Sigmoid colon (tissue), 7 donors: ENCODE measurements at regions of chr18 and their contacts with region 1.

Region 1: GRCh38 chr18:5295981-5296705 is 617 bp upstream of the ZBTB14 start:
- DNase-seq: peak; percentile 98
- H3K4me3 ChIP-seq: peak overlapping the region; percentile 83 to 96 (median 88)
- H3K27ac ChIP-seq: peak overlapping the region; percentile 98 to 100 (median 100)
- H3K4me1 ChIP-seq: peaks cover 0 to 17% (median 12%) of the 10 kb centered on the region in 4 donors
- H3K27me3 ChIP-seq: no peaks in the 10 kb centered on the region
- CTCF ChIP-seq: no peak
- EP300 ChIP-seq: peak in 1 of 4 donors; percentile 19
- POLR2A ChIP-seq: no peak

Region 2: DNA sequence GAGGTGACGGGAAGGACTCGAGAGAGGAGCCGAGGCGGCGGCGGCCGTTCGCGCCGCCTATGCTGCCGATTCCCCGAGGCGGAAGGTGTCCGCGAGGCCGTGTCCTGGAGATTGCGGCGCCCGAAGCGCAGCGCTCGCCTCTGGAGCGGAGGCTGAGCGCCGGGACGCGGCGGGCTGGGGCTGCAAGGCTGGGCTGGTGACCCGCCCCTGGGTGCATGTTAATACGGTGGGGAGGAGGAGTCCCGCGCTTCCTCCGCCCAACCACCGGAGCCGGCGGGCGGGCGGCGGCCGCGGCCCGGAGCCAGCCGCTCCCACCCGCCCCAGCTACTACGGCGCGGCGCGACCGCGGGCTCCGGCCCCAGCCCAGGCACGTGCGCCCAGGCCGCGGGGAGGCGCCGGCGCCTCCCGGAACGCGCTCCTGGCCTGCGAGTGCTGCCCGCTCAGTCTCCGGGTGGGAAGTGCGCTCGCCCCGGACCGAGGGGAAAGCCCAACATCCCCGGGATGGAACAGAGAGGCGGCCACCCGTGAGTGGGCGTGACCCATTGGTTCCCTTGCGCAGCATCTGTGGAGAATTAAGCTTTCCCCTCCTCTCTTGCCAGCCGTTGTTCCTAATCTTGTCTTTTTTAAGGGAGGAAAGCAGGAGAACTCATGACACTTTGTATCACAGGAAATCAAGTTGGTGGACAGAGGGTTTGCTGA is 840.9 kb before region 1 on chr18 and contains the start of gene DLGAP1:
- intact Hi-C with region 1: no loop called
- DNase-seq: peak; percentile 63
- H3K4me3 ChIP-seq: peak within 1 kb of the TSS in 3 of 4 donors; percentile 38 to 51 (median 45)
- H3K27ac ChIP-seq: no peak within 1 kb of the TSS
- H3K4me1 ChIP-seq: peaks cover 0 to 19% (median 16%) of the 10 kb centered on the region in 4 donors
- H3K27me3 ChIP-seq: peaks cover 9 to 56% (median 19%) of the 10 kb centered on the region in 3 donors
- CTCF ChIP-seq: no peak
- EP300 ChIP-seq: no peak
- POLR2A ChIP-seq: no peak
- total RNA-seq, gene DLGAP1: 1.1 to 2.6 (median 1.8) TPM

Region 3: DNA sequence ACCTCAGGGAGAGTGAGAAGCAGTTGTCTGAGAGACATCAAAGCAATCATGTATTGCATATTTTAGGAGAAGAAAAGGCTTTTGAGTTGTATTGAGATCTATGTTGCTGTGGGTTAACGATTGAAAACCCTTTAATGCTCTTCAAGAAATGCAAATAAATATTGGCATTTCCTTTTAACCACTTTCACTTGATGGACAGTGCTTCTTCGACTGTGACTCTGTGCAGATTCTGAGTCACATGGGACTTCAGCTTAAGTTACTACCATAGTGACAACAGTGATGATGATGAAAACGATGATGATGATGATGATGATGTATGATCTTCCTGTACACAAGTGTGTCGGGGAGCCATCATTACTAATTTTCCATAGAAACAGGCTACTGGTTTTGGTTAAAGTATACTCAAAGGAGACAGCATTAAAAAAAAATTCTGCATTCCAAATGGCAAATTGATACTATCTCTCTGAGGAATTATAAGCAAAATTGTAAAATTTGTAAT is 280.9 kb before region 1 on chr18:
- intact Hi-C with region 1: no loop called
- DNase-seq: no peak
- H3K4me3 ChIP-seq: no peak overlapping the region
- H3K27ac ChIP-seq: no peak overlapping the region
- H3K4me1 ChIP-seq: no peaks in the 10 kb centered on the region
- H3K27me3 ChIP-seq: no peaks in the 10 kb centered on the region
- CTCF ChIP-seq: no peak
- EP300 ChIP-seq: no peak
- POLR2A ChIP-seq: no peak

Region 4: GRCh38 chr18:5197032-5197434 is 99.1 kb before region 1 on chr18 and contains the start of gene AKAIN1:
- intact Hi-C with region 1: no loop called
- DNase-seq: no peak
- H3K4me3 ChIP-seq: no peak within 1 kb of the TSS
- H3K27ac ChIP-seq: no peak within 1 kb of the TSS
- H3K4me1 ChIP-seq: peaks cover 0 to 11% (median 0%) of the 10 kb centered on the region in 4 donors
- H3K27me3 ChIP-seq: peaks cover 25 to 66% (median 30%) of the 10 kb centered on the region in 3 donors
- CTCF ChIP-seq: no peak
- EP300 ChIP-seq: no peak
- POLR2A ChIP-seq: no peak
- total RNA-seq, gene AKAIN1: not detected

Region 5: GRCh38 chr18:5237723-5238370 is 58.3 kb before region 1 on chr18:
- intact Hi-C with region 1: loop called (anchors 1 kb)
- DNase-seq: peak; percentile 94
- H3K4me3 ChIP-seq: peak overlapping the region; percentile 72 to 95 (median 80)
- H3K27ac ChIP-seq: peak overlapping the region; percentile 94 to 100 (median 98)
- H3K4me1 ChIP-seq: peaks cover 0 to 39% (median 32%) of the 10 kb centered on the region in 4 donors
- H3K27me3 ChIP-seq: no peaks in the 10 kb centered on the region
- CTCF ChIP-seq: peak in 3 of 4 experiments; percentile 26 to 40 (median 36)
- EP300 ChIP-seq: peak in 1 of 4 donors; percentile 32
- POLR2A ChIP-seq: peak; percentile 44 to 62

Region 6: GRCh38 chr18:5317186-5317585 is 21.0 kb after region 1 on chr18:
- intact Hi-C with region 1: no loop called
- DNase-seq: no peak
- H3K4me3 ChIP-seq: no peak overlapping the region
- H3K27ac ChIP-seq: no peak overlapping the region
- H3K4me1 ChIP-seq: no peaks in the 10 kb centered on the region
- H3K27me3 ChIP-seq: no peaks in the 10 kb centered on the region
- CTCF ChIP-seq: no peak
- EP300 ChIP-seq: no peak
- POLR2A ChIP-seq: no peak

Region 7: DNA sequence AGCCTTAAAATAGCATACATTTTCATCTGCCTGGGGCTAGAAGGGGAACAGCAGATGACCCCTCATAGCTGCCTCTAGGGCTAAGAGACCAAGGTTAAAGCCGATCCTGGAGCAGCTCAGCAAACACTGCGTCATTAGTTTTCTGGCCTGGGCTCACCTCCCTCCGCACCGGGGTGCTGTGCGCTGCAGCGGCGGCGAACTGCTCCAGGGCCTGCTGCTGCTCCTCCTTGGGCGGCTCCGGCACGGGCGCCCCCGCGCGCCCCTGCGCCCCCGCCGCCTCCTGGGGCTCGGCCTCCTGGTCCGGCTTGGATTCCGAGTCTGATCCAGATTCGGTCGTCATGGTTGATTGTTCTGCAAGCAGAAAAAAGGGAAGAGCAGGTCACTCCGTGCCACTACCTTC is 192.7 kb after region 1 on chr18:
- intact Hi-C with region 1: loop called (anchors 10 kb)
- DNase-seq: peak; percentile 75
- H3K4me3 ChIP-seq: peak overlapping the region in 2 of 4 donors; percentile 23 to 31
- H3K27ac ChIP-seq: peak overlapping the region in 3 of 4 donors; percentile 7 to 76 (median 40)
- H3K4me1 ChIP-seq: peaks cover 0 to 26% (median 0%) of the 10 kb centered on the region in 4 donors
- H3K27me3 ChIP-seq: no peaks in the 10 kb centered on the region
- CTCF ChIP-seq: no peak
- EP300 ChIP-seq: no peak
- POLR2A ChIP-seq: no peak